CD4-positive, alpha-beta T cell (primary cell): ENCODE measurements at regions of chr5 and their contacts with region 1.

Region 1: DNA sequence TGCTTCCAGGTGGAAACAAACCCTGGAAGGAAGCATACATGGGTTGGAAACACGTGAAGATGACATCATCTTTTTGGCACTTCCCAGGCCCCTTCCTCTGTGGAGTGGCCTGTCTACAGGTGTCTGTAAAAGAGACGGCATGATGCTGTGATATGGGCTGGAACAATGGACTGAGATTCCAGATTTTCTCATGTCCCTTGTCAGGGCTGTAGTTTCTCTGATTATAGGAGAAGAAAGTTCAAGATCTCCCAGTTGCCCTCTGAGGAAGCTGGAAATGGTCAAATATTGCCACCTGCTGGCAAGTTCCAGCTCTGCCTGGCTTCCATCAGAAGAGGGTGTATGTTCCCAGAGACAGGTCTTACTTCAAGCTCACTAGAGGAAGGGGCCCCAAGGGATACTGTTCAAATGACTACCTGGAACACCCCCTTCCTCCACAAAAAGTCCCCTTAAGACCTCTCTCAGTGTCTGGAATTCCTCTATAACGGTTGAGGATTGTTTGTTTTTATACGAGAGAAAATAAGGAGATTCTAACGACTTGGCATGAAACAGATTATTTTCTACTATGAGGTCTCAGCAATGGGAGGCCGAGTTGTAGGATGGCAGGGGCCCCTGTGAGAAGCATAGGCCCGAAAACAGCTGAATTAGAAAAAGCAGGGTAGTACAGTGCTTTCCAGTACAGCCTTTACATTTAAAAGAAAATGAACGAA is 7.3 kb upstream of the ANXA6 start:
- DNase-seq: peak; percentile 68 to 91 (median 78)
- ATAC-seq: peak; percentile 99
- H3K4me3 ChIP-seq: no peak overlapping the region
- H3K4me3 Mint-ChIP-seq: peak overlapping the region; percentile 3
- H3K27ac ChIP-seq: no peak overlapping the region
- H3K27ac Mint-ChIP-seq: peak overlapping the region; percentile 3
- H3K4me1 ChIP-seq: peaks cover 12% of the 10 kb centered on the region
- H3K4me1 Mint-ChIP-seq: peaks cover 36% of the 10 kb centered on the region
- H3K27me3 ChIP-seq: no peaks in the 10 kb centered on the region
- H3K27me3 Mint-ChIP-seq: no peaks in the 10 kb centered on the region
- CTCF ChIP-seq: peak; percentile 93

Region 2: DNA sequence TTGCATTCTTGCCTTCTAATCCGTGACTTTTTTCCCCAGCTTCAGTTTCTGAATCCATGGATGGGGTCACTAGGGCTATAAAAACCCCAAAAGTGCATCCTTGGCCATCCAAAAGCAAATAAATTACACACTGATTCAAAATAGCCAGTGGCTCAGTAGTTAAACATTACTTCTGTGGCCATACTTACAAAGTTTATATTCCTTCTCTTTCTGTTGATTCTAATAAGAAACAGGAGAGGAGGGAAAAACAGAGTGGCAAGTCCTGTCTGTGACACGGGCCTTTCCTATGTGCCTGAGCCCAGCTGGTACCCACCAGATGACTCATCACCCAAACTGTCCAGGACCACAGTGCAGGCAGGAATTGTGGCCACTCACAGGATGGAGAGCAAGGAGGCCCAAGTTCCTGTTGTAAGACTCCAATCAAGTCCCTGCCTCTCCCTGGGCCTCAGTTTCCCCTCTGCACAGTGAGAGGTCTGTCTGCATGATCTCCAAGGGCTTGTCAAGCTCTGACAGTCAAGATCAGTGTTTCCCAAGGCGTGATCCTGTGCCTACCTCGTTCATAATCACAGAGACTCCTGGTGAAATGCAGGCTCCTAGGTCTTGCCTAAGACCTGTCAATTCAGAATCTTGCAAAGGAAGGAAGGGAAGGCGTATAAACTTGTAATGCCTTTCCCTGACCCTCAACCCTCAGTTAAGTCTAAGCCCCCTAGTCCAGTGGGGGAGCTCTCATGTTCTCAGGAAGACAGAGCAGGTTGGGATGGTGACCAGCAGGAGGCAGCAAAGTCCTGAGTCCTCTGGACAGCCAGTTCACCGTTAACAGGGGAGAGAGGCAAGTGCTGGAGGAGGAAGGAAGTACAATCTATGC is 113.5 kb before region 1 on chr5:
- CTCF ChIA-PET with region 1: interaction called, 5 read pairs
- POLR2A ChIA-PET with region 1: no interaction called
- intact Hi-C with region 1: loop called (anchors 2 kb)
- DNase-seq: peak; percentile 58 to 85 (median 65)
- ATAC-seq: peak; percentile 77
- H3K4me3 ChIP-seq: no peak overlapping the region
- H3K4me3 Mint-ChIP-seq: no peak overlapping the region
- H3K27ac ChIP-seq: no peak overlapping the region
- H3K27ac Mint-ChIP-seq: peak overlapping the region; percentile 41
- H3K4me1 ChIP-seq: peaks cover 7% of the 10 kb centered on the region
- H3K4me1 Mint-ChIP-seq: peaks cover 12% of the 10 kb centered on the region
- H3K27me3 ChIP-seq: no peaks in the 10 kb centered on the region
- H3K27me3 Mint-ChIP-seq: no peaks in the 10 kb centered on the region
- CTCF ChIP-seq: peak; percentile 74

Region 3: DNA sequence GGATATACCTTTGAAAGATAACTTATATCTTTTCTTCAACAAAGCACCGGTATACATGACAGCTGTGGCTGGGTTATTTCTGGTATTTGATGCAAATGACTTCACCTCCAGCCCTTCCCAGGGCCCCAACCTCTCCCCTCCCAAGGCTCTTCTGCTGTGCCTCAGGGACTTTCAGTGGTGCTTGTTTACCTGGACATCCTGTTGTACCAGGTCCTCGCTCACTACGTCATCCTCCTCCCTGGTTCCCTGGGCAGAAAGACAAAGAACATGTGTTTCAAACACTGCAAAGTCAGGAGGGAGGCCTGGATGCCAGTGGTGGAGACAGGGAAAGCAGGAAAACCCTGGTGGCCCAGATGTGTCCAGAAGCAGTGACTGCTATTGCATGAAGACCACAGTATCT is 30.6 kb before region 1 on chr5:
- CTCF ChIA-PET with region 1: interaction called, 34 read pairs
- POLR2A ChIA-PET with region 1: interaction called, 97 read pairs
- intact Hi-C with region 1: no loop called
- DNase-seq: no peak
- ATAC-seq: no peak
- H3K4me3 ChIP-seq: no peak overlapping the region
- H3K4me3 Mint-ChIP-seq: no peak overlapping the region
- H3K27ac ChIP-seq: peak overlapping the region; percentile 47 to 51
- H3K27ac Mint-ChIP-seq: peak overlapping the region; percentile 91
- H3K4me1 ChIP-seq: peaks cover 62% of the 10 kb centered on the region
- H3K4me1 Mint-ChIP-seq: peaks cover 93% of the 10 kb centered on the region
- H3K27me3 ChIP-seq: no peaks in the 10 kb centered on the region
- H3K27me3 Mint-ChIP-seq: no peaks in the 10 kb centered on the region
- CTCF ChIP-seq: no peak

Region 4: DNA sequence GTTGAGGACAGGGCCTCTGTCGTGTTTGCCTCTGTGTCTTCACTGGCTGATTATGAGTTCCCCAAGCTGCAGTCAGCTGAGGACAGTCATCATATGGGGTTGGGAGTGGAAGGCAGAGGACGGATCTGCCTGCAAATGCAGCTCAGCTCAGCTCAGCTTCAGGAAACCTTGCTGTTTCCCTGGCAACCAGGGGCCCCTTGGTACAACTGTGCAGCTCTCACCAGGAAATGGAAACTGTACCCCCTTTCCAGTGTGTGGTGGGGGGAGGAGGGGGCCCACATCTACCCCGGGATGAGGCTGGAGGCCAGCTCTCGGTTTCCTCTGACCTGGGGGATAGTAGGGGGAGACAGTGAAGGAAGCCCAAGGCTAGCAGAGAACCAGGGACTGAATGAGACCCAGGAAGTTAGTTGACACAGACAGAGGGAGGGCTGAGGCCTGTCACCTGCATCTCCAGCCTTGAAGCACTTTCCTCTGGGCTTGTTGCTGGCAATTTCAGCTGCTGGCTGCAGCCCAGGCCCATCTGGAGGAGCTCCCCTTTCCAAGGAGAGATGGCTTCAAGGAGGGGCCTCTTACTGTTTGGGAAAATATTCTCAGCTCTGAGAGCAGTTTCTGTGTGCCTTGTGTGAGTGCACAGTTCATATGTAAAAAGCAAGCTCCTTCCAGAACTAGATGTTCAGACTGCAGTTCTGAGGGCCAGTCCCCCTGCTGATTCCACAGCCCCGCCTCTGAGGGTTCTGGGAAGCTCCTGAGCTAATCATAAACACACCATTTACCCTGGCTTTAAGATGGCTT is 14.2 kb before region 1 on chr5:
- CTCF ChIA-PET with region 1: interaction called, 28 read pairs
- POLR2A ChIA-PET with region 1: interaction called, 9 read pairs
- intact Hi-C with region 1: loop called in 1 of 2 experiments (anchors 1 kb)
- DNase-seq: peak; percentile 53 to 88 (median 75)
- ATAC-seq: peak; percentile 83
- H3K4me3 ChIP-seq: peak overlapping the region; percentile 22
- H3K4me3 Mint-ChIP-seq: peak overlapping the region; percentile 58
- H3K27ac ChIP-seq: peak overlapping the region; percentile 89 to 91
- H3K27ac Mint-ChIP-seq: peak overlapping the region; percentile 91
- H3K4me1 ChIP-seq: peaks cover 100% of the 10 kb centered on the region
- H3K4me1 Mint-ChIP-seq: peaks cover 98% of the 10 kb centered on the region
- H3K27me3 ChIP-seq: no peaks in the 10 kb centered on the region
- H3K27me3 Mint-ChIP-seq: no peaks in the 10 kb centered on the region
- CTCF ChIP-seq: no peak

Region 5: DNA sequence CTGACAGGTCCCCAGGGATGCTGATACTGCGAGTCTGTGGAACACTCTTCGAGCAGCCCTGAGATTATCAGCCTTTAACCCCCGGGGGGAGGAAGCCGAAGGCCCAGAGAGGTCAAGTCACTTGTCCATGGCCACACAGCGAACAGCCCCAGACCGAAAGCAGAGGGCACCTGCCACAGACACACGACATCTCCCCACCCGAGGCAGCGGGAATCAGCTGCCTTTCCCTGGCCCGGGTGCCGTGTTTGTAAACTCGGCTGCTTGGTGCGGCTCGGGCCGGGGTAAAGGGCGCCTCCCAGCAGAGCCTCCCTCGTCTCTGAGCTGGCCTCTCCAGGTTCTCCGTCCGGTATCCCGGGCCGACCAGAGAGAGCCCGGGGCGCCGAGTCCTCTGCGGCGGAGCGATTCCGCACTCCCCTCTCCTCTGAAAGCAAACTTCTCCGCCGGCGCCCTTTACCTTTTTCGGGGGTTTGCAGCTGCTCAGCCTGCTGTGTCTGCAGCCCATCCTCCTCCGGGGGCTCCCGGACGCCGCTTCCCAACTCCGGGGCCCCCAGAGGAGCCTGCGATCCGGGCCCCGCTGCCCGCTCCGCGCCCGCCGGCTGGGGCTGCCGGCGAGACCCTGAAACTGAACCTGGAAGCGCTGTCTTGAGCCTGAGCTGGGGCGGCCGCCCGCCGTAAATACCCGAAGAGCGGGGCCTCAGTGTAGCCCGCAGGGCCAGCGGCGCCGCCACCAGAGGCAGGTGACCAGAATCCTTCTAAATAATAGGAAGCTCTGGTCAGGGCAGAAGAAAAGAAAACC is 58.8 kb after region 1 on chr5 and contains the start of gene CCDC69:
- CTCF ChIA-PET with region 1: interaction called, 5 read pairs
- POLR2A ChIA-PET with region 1: interaction called, 10 read pairs
- intact Hi-C with region 1: no loop called
- DNase-seq: peak in 12 of 14 experiments; percentile 16 to 73 (median 50)
- ATAC-seq: peak; percentile 40
- H3K4me3 ChIP-seq: peak within 1 kb of the TSS; percentile 98
- H3K4me3 Mint-ChIP-seq: peak within 1 kb of the TSS; percentile 92
- H3K27ac ChIP-seq: peak within 1 kb of the TSS; percentile 92 to 94
- H3K27ac Mint-ChIP-seq: peak within 1 kb of the TSS; percentile 94
- H3K4me1 ChIP-seq: peaks cover 64% of the 10 kb centered on the region
- H3K4me1 Mint-ChIP-seq: peaks cover 63% of the 10 kb centered on the region
- H3K27me3 ChIP-seq: no peaks in the 10 kb centered on the region
- H3K27me3 Mint-ChIP-seq: no peaks in the 10 kb centered on the region
- CTCF ChIP-seq: no peak
- total RNA-seq, gene CCDC69: 68.0 to 68.9 TPM